Activated CD4-positive, alpha-beta memory T cell treated with anti-CD3 and anti-CD28 coated beads for 36 hours (primary cell): ENCODE measurements at regions of chr2 and their contacts with region 1.

Region 1: GRCh38 chr2:45000921-45001868 is 8.1 kb downstream of the SIX2 start:
- DNase-seq: no peak
- H3K4me3 Mint-ChIP-seq: peak overlapping the region; percentile 39
- H3K27ac Mint-ChIP-seq: no peak overlapping the region
- H3K4me1 Mint-ChIP-seq: peaks cover 28% of the 10 kb centered on the region
- H3K27me3 Mint-ChIP-seq: peaks cover 76% of the 10 kb centered on the region

Region 2: GRCh38 chr2:44941551-44942234 is 59.5 kb before region 1 on chr2 and contains the start of gene SIX3:
- CTCF ChIA-PET with region 1: no interaction called
- POLR2A ChIA-PET with region 1: no interaction called
- intact Hi-C with region 1: loop called (anchors 5 kb)
- DNase-seq: peak; percentile 63
- H3K4me3 Mint-ChIP-seq: peak within 1 kb of the TSS; percentile 70
- H3K27ac Mint-ChIP-seq: no peak within 1 kb of the TSS
- H3K4me1 Mint-ChIP-seq: peaks cover 37% of the 10 kb centered on the region
- H3K27me3 Mint-ChIP-seq: peaks cover 75% of the 10 kb centered on the region
- total RNA-seq, gene SIX3: not detected